Activated CD4-positive, alpha-beta memory T cell treated with anti-CD3 and anti-CD28 coated beads, Interleukin-2, amount 10 ng/mL, durations not matched to agents 7 days and 5 days (primary cell): ENCODE measurements at regions of chr11 and their contacts with region 1.

Region 1: GRCh38 chr11:82775736-82776346 is 42.2 kb upstream of the FAM181B start:
- DNase-seq: peak; percentile 44
- H3K4me3 Mint-ChIP-seq: no peak overlapping the region
- H3K27ac Mint-ChIP-seq: no peak overlapping the region
- H3K4me1 Mint-ChIP-seq: no peaks in the 10 kb centered on the region
- H3K27me3 Mint-ChIP-seq: peaks cover 24% of the 10 kb centered on the region

Region 2: DNA sequence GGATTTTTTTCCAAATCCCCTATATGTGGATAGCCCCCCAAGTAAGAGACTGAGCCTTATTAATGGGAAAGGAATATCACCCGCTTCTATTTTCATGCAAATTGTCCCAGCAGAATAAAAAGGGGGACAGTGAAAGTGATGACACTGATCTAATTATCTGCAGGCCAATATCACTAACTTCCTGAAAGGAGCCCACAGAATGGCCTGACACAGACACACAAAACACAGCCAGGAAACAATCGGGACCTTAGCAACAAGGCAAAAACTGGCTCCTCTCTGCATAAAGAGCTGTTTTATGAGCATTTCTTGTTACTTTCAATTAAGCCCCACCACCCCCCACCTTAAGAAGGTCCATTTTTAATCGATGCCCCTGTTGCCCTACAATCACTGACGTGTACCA is 12.1 kb after region 1 on chr11:
- CTCF ChIA-PET with region 1: interaction called, 10 read pairs
- POLR2A ChIA-PET with region 1: no interaction called
- DNase-seq: no peak
- H3K4me3 Mint-ChIP-seq: no peak overlapping the region
- H3K27ac Mint-ChIP-seq: no peak overlapping the region
- H3K4me1 Mint-ChIP-seq: no peaks in the 10 kb centered on the region
- H3K27me3 Mint-ChIP-seq: peaks cover 9% of the 10 kb centered on the region

Region 3: DNA sequence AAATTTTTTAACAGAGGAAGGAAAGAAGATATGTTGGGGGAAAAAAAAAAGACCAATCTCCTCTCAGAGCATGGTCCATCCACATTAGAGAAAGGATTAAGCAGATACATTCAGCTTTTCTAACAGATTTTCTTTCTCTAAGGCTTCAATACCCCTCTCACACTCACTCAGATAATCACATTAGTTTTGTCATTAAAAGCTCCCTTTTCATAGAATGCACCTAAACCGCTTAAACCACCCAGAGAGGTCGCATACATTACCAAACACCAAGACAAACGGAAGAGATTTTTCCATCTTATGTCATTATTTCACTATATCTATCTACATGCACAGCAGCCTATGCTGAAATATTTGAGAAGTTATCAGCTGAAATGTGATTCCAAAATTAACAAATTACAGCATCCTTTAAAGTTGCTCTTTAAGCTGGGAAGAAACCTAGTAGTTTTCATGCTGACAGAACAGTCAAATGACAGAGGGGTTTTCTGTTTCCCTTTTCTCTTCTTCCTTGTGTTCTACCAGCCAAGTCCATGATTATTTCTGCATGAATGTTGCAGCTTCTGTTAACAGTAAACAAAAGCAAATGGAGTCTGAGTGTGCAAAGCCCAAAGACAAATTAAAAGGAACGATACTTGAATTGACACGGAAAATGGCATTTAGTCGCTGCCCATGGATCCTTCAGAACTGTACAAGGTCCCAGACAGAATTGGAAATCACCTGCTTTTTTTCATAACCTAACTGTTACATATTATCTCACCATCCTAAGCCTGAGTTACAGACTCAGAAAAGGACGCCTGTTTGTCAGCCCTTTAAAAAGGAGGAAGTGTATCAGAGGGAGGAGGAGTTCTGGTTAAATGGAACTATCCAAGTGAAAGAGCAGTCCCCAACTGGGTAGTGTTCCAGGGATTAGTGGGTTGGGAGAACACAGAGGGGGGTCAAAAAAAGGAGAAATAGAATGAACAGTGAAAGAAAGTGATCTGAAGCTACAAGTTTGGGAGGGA is 69.8 kb after region 1 on chr11:
- CTCF ChIA-PET with region 1: no interaction called
- POLR2A ChIA-PET with region 1: no interaction called
- DNase-seq: no peak
- H3K4me3 Mint-ChIP-seq: no peak overlapping the region
- H3K27ac Mint-ChIP-seq: no peak overlapping the region
- H3K4me1 Mint-ChIP-seq: no peaks in the 10 kb centered on the region
- H3K27me3 Mint-ChIP-seq: no peaks in the 10 kb centered on the region